ENCODE measurements at regions of chr15 and their contacts with region 1.

Region 1: DNA sequence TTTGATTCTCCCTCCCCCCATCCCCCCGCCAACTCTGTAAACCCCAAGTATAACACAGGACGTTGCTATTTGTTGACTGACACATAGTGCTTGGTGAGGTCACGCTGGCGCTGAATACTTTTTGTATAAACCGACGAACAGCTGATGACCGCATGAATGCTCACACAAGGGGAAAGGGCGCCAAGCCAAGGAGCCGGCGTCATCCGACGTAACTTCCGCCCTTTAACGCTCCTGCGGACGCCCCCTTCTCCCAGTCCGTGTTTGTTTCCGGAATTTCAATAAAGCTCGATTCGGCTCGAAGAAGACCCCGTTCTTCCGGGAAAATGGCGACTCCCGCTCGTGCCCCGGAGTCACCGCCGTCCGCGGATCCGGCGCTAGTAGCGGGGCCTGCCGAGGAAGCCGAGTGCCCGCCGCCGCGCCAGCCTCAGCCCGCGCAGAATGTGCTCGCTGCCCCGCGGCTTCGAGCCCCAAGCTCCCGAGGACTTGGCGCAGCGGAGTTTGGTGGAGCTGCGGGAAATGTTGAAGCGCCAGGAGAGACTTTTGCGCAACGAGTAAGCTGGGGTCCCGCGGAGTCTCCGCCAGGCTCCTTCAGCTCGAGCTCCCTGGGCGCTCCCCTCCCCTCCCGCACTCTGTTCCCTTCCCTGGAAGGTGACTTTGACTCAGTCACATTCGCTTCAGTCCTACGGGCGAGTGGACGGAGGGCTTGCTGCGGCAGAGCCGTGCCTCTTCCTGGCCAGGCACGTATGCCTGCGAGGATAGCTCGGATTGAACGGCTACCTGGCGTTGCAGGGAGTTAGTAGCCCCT is at the start of gene POLR2M:
- DNase-seq: peak; percentile 97
- H3K4me3 Mint-ChIP-seq: peak within 1 kb of the TSS; percentile 79
- H3K27ac Mint-ChIP-seq: peak within 1 kb of the TSS; percentile 63
- H3K4me1 Mint-ChIP-seq: peaks cover 37% of the 10 kb centered on the region
- H3K27me3 Mint-ChIP-seq: no peaks in the 10 kb centered on the region
- CTCF ChIP-seq: no peak
- total RNA-seq, gene POLR2M: 84.1 and 114 TPM in 2 replicates

Region 2: GRCh38 chr15:57611938-57612337 is 94.7 kb before region 1 on chr15:
- CTCF ChIA-PET with region 1: interaction called, 8 read pairs
- POLR2A ChIA-PET with region 1: interaction called, 11 read pairs
- intact Hi-C with region 1: no loop called
- DNase-seq: peak; percentile 84
- H3K4me3 Mint-ChIP-seq: no peak overlapping the region
- H3K27ac Mint-ChIP-seq: peak overlapping the region; percentile 35
- H3K4me1 Mint-ChIP-seq: peaks cover 51% of the 10 kb centered on the region
- H3K27me3 Mint-ChIP-seq: no peaks in the 10 kb centered on the region
- CTCF ChIP-seq: peak; percentile 51

Region 3: GRCh38 chr15:57667171-57667849 is 39.3 kb before region 1 on chr15:
- CTCF ChIA-PET with region 1: interaction called, 9 read pairs
- POLR2A ChIA-PET with region 1: interaction called, 45 read pairs
- intact Hi-C with region 1: loop called (anchors 2 kb)
- DNase-seq: peak; percentile 73
- H3K4me3 Mint-ChIP-seq: peak overlapping the region; percentile 43
- H3K27ac Mint-ChIP-seq: no peak overlapping the region
- H3K4me1 Mint-ChIP-seq: peaks cover 19% of the 10 kb centered on the region
- H3K27me3 Mint-ChIP-seq: no peaks in the 10 kb centered on the region
- CTCF ChIP-seq: peak; percentile 50

Region 4: GRCh38 chr15:57692709-57693108 is 13.9 kb before region 1 on chr15:
- CTCF ChIA-PET with region 1: interaction called, 6 read pairs
- POLR2A ChIA-PET with region 1: interaction called, 40 read pairs
- intact Hi-C with region 1: no loop called
- DNase-seq: peak; percentile 79
- H3K4me3 Mint-ChIP-seq: no peak overlapping the region
- H3K27ac Mint-ChIP-seq: peak overlapping the region; percentile 55
- H3K4me1 Mint-ChIP-seq: peaks cover 45% of the 10 kb centered on the region
- H3K27me3 Mint-ChIP-seq: no peaks in the 10 kb centered on the region
- CTCF ChIP-seq: no peak

Region 5: GRCh38 chr15:57727031-57727430 is 20.4 kb after region 1 on chr15:
- CTCF ChIA-PET with region 1: interaction called, 17 read pairs
- POLR2A ChIA-PET with region 1: interaction called, 36 read pairs
- intact Hi-C with region 1: no loop called
- DNase-seq: peak; percentile 82
- H3K4me3 Mint-ChIP-seq: no peak overlapping the region
- H3K27ac Mint-ChIP-seq: peak overlapping the region; percentile 78
- H3K4me1 Mint-ChIP-seq: peaks cover 17% of the 10 kb centered on the region
- H3K27me3 Mint-ChIP-seq: no peaks in the 10 kb centered on the region
- CTCF ChIP-seq: no peak

Region 6: GRCh38 chr15:57797110-57797509 is 90.5 kb after region 1 on chr15:
- CTCF ChIA-PET with region 1: no interaction called
- POLR2A ChIA-PET with region 1: no interaction called
- intact Hi-C with region 1: no loop called
- DNase-seq: no peak
- H3K4me3 Mint-ChIP-seq: no peak overlapping the region
- H3K27ac Mint-ChIP-seq: no peak overlapping the region
- H3K4me1 Mint-ChIP-seq: no peaks in the 10 kb centered on the region
- H3K27me3 Mint-ChIP-seq: no peaks in the 10 kb centered on the region
- CTCF ChIP-seq: no peak

Region 7: DNA sequence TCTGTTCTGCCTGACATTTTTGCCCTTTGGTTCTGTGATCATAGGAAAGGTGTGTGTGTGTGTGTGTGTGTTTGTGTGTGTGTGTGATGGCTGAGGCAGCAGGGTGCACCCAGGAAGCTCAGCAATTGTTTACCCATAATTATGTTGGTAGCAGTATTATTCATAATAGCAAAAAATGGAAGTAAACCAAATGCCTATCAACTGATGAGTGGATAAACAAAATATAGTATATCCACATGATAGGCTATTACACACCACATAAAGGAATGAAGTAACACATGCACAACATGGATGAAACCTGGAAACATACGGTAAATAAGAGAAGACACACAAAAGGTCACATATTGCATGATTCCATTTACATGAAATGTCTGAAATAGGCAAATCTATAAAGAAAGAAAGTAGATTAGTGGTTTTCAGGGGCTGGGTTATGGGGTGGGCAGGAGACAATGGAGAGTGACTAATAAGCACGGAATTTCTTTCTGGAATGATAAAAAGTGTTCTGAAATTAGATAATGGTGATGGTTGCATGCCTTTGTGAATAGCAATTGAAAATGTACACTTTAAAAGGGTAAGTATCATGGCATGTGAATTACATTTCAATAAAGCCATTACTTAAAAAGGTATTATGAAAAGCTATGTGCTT is 167.1 kb after region 1 on chr15:
- CTCF ChIA-PET with region 1: no interaction called
- POLR2A ChIA-PET with region 1: no interaction called
- intact Hi-C with region 1: no loop called
- DNase-seq: no peak
- H3K4me3 Mint-ChIP-seq: no peak overlapping the region
- H3K27ac Mint-ChIP-seq: no peak overlapping the region
- H3K4me1 Mint-ChIP-seq: peaks cover 23% of the 10 kb centered on the region
- H3K27me3 Mint-ChIP-seq: no peaks in the 10 kb centered on the region
- CTCF ChIP-seq: no peak

Measured in MCF 10A (cell line).